Activated CD4-positive, alpha-beta T cell treated with anti-CD3 and anti-CD28 coated beads, Interleukin-2, amount 10 ng/mL, durations not matched to agents 24 days and 14 days (primary cell): ENCODE measurements at regions of chr5 and their contacts with region 1.

Region 1: DNA sequence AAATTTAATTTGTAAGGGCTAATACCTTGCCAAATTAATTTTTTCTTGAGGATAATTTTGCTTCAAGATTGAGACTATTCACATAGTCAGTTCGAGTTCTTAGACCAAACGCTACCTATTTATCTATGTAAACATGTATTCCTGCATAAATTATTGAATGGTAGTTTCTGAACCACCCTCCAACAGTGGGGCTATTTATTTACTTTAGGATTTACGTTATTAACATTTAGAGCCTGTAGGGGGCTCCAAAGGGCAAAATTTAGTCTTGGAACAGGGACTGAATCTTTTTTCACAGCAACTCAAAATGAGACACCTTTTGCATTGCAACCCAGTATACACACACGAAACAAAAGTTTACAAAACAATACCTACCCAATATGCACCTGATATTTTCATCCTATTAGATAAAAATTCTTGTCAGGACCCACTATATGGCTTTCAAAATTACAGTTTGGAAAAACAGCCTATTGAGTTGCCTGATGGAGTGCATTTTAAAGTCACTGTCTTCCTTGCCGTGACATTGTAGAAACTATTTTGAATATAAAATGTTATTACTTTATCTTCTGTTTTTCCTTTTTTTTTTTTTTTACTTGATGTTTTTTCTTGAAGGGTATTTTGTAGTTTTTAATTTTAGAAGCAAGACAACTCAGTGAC is 47.1 kb upstream of the POU4F3 start:
- DNase-seq: peak; percentile 71
- H3K4me3 Mint-ChIP-seq: no peak overlapping the region
- H3K27ac Mint-ChIP-seq: no peak overlapping the region
- H3K4me1 Mint-ChIP-seq: no peaks in the 10 kb centered on the region
- H3K27me3 Mint-ChIP-seq: no peaks in the 10 kb centered on the region

Region 2: GRCh38 chr5:146426853-146427618 is 135.5 kb after region 1 on chr5:
- intact Hi-C with region 1: loop called (anchors 1 kb)
- DNase-seq: peak; percentile 63
- H3K4me3 Mint-ChIP-seq: no peak overlapping the region
- H3K27ac Mint-ChIP-seq: no peak overlapping the region
- H3K4me1 Mint-ChIP-seq: peaks cover 6% of the 10 kb centered on the region
- H3K27me3 Mint-ChIP-seq: peaks cover 9% of the 10 kb centered on the region